GM23248 (cell line): ENCODE measurements at regions of chr22 and their contacts with region 1.

Region 1: GRCh38 chr22:45096256-45096907 is 67.3 kb upstream of the NUP50 start:
- DNase-seq: peak; percentile 75
- H3K4me3 ChIP-seq: no peak overlapping the region
- H3K27ac ChIP-seq: no peak overlapping the region
- H3K4me1 ChIP-seq: no peaks in the 10 kb centered on the region
- H3K27me3 ChIP-seq: peaks cover 25% of the 10 kb centered on the region

Region 2: GRCh38 chr22:44819971-44820631 is 276.3 kb before region 1 on chr22:
- in situ Hi-C with region 1: loop called (anchors 10 kb)
- DNase-seq: no peak
- H3K4me3 ChIP-seq: no peak overlapping the region
- H3K27ac ChIP-seq: no peak overlapping the region
- H3K4me1 ChIP-seq: no peaks in the 10 kb centered on the region
- H3K27me3 ChIP-seq: peaks cover 3% of the 10 kb centered on the region; the same call in 1 of the 2 replicates

Region 3: DNA sequence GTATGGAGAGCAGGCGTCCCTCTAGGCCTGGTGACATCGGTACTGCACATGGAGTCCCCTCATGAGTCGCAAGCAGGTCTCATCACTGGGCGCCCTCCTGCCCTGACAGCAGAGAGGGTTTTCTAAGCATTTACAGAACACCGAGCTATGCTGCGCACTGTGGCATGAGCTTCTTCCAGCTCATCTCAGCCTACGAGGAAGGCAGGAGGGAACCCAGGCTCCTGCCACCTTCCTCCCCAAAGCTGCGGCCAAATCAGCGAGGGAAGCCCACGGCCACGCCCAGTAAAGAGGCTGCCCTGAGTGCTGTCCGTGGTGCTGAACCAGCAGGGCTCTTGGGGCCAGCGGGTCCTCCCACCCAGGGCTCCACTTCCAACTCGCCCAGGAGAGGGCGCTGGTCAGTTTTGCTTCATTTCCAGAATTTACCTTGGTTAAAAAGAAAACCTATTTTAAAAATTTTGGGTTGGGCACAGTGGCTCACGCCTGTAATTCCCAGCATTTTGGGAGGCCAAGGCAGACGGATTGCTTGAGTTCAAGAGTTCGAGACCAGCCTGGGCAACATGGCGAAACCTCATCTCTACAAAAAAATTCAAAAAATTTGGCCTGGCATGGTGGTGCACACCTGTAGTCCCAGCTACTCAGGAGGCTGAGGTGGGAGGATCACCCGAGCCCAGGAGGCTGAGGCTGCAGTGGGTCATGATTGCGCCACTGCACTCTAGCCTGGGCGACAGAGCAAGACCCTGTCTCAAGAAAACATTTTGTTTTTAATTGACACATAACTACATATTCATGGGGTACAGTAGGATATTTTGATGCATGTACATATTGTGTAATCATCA is 120.7 kb before region 1 on chr22:
- in situ Hi-C with region 1: loop called (anchors 10 kb)
- DNase-seq: peak; percentile 89
- H3K4me3 ChIP-seq: no peak overlapping the region
- H3K27ac ChIP-seq: no peak overlapping the region
- H3K4me1 ChIP-seq: no peaks in the 10 kb centered on the region
- H3K27me3 ChIP-seq: peaks cover 15% of the 10 kb centered on the region